Activated CD4-positive, alpha-beta memory T cell treated with anti-CD3 and anti-CD28 coated beads for 36 hours (primary cell): ENCODE measurements at regions of chr14 and their contacts with region 1.

Region 1: GRCh38 chr14:100078991-100079725 is 13.9 kb downstream of the EVL start:
- DNase-seq: peak; percentile 88
- H3K4me3 Mint-ChIP-seq: peak overlapping the region; percentile 63
- H3K27ac Mint-ChIP-seq: peak overlapping the region; percentile 87
- H3K4me1 Mint-ChIP-seq: peaks cover 96% of the 10 kb centered on the region
- H3K27me3 Mint-ChIP-seq: no peaks in the 10 kb centered on the region

Region 2: DNA sequence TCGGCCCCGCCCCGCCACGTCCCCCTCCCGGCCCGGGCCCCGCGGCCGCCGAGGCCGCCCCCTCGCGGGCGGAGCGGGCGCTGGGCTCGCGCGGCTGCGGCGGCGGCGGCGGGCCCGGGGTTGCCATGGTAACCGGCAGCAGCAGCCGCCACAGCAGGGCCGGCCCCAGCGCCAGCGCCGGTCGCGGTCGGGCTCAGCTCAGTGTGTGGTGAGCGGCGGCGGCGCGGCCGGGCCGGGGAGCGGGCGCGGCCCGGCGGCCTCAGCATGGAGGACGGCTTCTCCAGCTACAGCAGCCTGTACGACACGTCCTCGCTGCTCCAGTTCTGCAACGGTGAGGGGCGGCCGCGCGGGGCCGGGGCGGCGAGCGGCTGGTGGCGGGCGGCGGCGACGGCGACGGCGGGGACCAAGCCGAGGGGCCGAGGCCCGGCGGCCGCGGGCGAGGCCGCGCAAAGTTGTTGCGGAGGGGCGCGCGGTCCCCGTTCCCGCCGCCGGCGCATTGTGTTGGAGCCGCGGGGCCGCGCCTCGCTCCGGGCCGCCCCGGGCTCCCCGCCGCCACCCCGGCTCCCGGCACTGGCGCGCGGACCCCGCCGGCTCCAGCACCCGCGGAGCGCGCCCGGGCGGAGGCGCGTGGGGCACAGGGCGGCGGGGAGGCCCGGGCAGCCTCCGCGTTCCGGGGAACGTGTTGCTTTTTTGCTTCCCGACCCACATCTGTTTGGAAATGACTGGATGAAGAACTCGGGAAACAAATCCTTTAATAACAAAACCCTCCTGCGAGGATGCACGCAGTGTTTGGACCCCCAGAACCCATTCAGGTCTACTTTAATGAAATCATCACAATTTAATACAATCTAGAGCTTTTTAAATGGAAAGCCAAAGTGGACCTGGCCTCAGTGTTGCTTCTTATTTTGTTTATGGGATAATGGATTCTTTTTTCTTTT is 285.7 kb before region 1 on chr14 and contains the start of gene EML1:
- CTCF ChIA-PET with region 1: no interaction called
- POLR2A ChIA-PET with region 1: no interaction called
- intact Hi-C with region 1: no loop called
- DNase-seq: peak; percentile 80
- H3K4me3 Mint-ChIP-seq: peak within 1 kb of the TSS; percentile 57
- H3K27ac Mint-ChIP-seq: peak within 1 kb of the TSS; percentile 0
- H3K4me1 Mint-ChIP-seq: peaks cover 11% of the 10 kb centered on the region
- H3K27me3 Mint-ChIP-seq: peaks cover 14% of the 10 kb centered on the region
- total RNA-seq, gene EML1: 1.5 to 1.9 TPM

Region 3: GRCh38 chr14:100056964-100057795 is 22.0 kb before region 1 on chr14:
- CTCF ChIA-PET with region 1: interaction called, 10 read pairs
- POLR2A ChIA-PET with region 1: interaction called, 302 read pairs
- intact Hi-C with region 1: no loop called
- DNase-seq: no peak
- H3K4me3 Mint-ChIP-seq: no peak overlapping the region
- H3K27ac Mint-ChIP-seq: peak overlapping the region; percentile 56
- H3K4me1 Mint-ChIP-seq: peaks cover 49% of the 10 kb centered on the region
- H3K27me3 Mint-ChIP-seq: no peaks in the 10 kb centered on the region

Region 4: GRCh38 chr14:100062590-100062989 is 16.6 kb before region 1 on chr14:
- CTCF ChIA-PET with region 1: interaction called, 191 read pairs
- POLR2A ChIA-PET with region 1: interaction called, 302 read pairs
- intact Hi-C with region 1: no loop called
- DNase-seq: peak; percentile 78
- H3K4me3 Mint-ChIP-seq: peak overlapping the region; percentile 69
- H3K27ac Mint-ChIP-seq: peak overlapping the region; percentile 98
- H3K4me1 Mint-ChIP-seq: peaks cover 80% of the 10 kb centered on the region
- H3K27me3 Mint-ChIP-seq: no peaks in the 10 kb centered on the region

Region 5: DNA sequence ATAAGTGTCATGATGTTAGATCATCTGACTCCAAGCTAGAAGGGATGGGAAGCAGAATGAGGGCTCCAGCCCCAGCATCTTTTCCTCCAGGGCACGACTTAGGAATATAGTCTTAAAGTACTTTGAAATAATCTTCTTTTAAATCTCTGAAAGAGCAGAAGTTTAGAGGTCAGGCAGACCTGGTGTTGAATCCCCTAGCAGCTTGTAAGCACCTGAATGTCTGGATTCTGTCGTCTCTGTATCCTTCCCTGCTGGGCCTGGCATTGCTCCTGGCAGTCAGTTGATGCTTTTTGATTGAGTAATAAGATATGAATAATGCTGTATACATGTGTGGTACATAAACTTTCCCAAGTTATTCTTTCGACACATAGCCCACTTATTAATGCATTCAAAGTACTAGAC is 17.4 kb after region 1 on chr14:
- CTCF ChIA-PET with region 1: interaction called, 573 read pairs
- POLR2A ChIA-PET with region 1: interaction called, 200 read pairs
- intact Hi-C with region 1: no loop called
- DNase-seq: peak; percentile 5
- H3K4me3 Mint-ChIP-seq: no peak overlapping the region
- H3K27ac Mint-ChIP-seq: peak overlapping the region; percentile 38
- H3K4me1 Mint-ChIP-seq: peaks cover 83% of the 10 kb centered on the region
- H3K27me3 Mint-ChIP-seq: no peaks in the 10 kb centered on the region